Right ventricle myocardium superior (tissue), 1 donor: ENCODE measurements at regions of chr11 and their contacts with region 1.

Region 1: DNA sequence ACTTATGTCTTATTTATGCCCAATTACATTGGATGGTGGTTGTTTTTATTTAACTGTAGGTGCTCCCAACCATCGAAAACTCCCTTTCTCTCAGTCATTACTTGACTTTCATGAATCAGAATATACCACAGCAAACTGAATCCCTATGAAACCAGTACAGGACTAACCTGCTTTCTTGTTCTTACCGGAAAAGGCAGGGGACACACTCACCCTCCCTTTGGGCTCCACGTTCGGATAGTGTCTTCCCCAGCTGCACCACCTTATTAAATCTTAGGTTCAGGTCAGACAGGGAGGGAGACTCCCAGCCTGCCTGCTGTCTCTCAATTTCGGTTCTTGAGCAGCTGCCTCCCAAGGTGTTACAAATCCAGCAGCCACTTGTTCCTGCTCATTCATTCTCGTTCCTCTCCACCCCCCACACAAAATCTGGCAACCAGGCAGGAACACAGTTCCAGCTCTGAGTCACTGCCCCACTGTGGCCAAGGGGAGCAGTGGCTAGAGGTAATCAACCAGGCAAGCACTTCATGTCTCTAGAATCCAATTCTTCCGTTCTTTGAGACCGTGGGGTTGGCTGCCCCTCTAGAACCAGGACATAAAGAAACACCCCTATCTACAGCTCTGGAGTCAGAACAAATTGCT is 133.0 kb downstream of the PLEKHA7 start:
- DNase-seq: peak; percentile 70
- ATAC-seq: peak; percentile 87

Region 2: DNA sequence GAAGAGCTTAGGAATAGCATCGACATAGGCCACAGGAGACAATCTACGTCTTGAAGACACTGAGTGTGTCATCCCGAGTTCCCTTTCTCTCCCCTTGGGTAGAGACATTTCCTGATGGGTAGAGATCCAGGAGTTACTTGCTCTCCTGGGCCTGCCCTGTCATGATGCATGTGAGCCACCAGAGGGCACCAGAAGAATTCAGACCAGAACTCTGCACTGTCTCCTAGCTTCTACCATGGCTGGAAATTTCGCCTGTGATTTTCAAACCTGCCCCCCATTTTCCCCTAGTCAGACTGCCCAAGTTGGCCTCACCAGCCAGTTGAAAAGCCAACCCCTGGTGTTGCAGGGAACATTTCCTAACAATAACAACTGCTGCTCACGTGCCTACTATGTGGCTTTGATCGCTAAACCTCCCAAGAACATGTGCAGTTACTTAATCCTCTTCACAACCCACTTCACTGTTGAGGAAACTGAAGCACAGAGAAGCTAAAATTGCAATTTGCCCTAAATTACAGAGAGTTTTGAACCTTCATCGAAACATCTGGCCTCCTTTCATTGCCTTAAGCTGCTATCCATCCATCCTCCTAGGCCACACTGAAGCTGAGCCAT is 95.6 kb before region 1 on chr11:
- intact Hi-C with region 1: loop called (anchors 10 kb)
- DNase-seq: peak; percentile 66
- ATAC-seq: peak; percentile 86